ENCODE measurements at regions of chr9 and their contacts with region 1.

Region 1: DNA sequence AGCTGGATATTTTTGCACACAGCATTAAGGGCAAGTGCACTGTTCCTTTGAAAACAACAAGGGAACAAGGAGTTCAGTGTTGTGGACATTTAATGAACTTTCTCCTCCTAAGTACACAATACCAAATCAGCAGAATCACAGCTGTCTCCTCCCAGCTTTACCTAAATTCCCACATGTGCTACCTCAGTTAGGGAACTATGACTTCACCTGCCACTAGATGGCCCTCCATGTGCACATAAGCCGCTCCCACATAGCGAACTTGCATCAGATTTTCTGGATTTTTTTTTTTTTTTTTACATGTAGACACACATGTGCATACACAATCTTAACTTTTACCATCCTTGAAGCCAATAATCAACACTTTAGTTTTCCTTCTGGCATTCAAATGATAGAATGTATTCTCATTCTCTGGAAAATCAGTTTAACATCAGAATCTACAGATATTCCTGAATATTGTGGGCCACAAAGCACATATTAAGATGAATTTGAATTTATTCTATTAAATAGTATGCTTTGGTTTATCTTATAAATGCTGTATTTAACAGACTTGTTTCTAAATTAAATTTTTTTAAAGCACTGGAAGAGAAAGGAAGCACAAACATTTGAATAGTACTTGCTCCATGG is 123.6 kb downstream of the PALM2AKAP2 start:
- DNase-seq: peak; percentile 82
- ATAC-seq: peak; percentile 85
- H3K4me3 Mint-ChIP-seq: no peak overlapping the region
- H3K27ac Mint-ChIP-seq: peak overlapping the region; percentile 45
- H3K4me1 Mint-ChIP-seq: peaks cover 5% of the 10 kb centered on the region
- H3K27me3 Mint-ChIP-seq: peaks cover 4% of the 10 kb centered on the region

Region 2: DNA sequence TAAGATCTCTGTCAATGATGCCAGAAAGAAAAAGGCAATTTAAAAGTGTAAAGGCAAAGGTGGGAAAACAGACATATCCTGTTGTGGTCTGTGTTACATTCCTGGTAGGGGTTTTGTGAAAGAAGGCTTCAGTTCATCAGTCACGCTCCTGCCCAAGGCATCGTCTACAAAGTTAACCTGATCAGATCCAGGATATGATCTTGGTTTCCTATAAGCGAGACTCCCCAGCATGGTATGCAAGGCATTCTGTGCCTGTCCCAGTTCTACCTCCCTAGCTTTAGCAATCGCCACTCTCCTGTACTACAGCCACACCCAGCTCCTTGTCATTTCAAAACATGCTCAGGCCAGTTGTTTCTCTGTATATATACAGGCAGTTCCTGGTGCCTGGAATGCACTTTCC is 347.6 kb before region 1 on chr9:
- CTCF ChIA-PET with region 1: no interaction called
- POLR2A ChIA-PET with region 1: no interaction called
- intact Hi-C with region 1: no loop called
- DNase-seq: no peak
- ATAC-seq: no peak
- H3K4me3 Mint-ChIP-seq: no peak overlapping the region
- H3K27ac Mint-ChIP-seq: no peak overlapping the region
- H3K4me1 Mint-ChIP-seq: no peaks in the 10 kb centered on the region
- H3K27me3 Mint-ChIP-seq: peaks cover 15% of the 10 kb centered on the region

Region 3: GRCh38 chr9:109806506-109807115 is 97.0 kb before region 1 on chr9:
- CTCF ChIA-PET with region 1: no interaction called
- POLR2A ChIA-PET with region 1: no interaction called
- intact Hi-C with region 1: no loop called
- DNase-seq: no peak
- ATAC-seq: no peak
- H3K4me3 Mint-ChIP-seq: no peak overlapping the region
- H3K27ac Mint-ChIP-seq: no peak overlapping the region
- H3K4me1 Mint-ChIP-seq: no peaks in the 10 kb centered on the region
- H3K27me3 Mint-ChIP-seq: peaks cover 10% of the 10 kb centered on the region

Region 4: DNA sequence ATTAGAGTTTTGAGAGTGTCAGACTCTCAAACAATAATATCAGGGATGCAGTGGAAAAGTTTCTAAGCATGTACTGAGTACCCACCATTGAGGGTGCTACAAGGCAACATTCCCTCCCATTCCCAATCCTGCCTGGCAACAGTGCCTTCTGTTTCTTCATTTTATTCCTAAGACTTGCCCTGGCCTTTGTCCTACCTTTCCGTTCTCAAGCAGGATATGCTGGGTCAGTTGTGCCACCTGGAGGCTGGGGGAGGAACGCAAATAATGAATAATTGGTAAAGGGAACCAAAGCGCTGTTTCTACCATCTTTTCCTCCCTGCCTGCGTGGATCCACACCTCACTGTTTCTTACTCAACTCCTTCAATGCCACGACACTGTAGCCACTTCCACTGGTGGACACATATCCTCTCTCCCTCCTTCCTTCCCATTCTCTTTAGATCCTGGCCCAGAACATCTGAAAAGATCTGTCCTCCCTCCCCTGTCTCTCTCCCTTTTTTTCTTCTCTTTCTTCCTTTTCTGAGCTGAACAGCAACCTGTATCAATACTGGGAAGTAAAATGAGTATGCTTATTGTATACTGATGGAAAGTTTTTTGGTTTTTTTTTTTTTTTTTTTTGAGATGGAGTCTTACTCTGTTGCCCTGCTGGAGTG is 154.8 kb after region 1 on chr9:
- CTCF ChIA-PET with region 1: interaction called, 49 read pairs
- POLR2A ChIA-PET with region 1: no interaction called
- intact Hi-C with region 1: loop called (anchors 1 kb)
- DNase-seq: peak; percentile 71
- ATAC-seq: peak; percentile 66
- H3K4me3 Mint-ChIP-seq: no peak overlapping the region
- H3K27ac Mint-ChIP-seq: peak overlapping the region; percentile 48
- H3K4me1 Mint-ChIP-seq: peaks cover 9% of the 10 kb centered on the region
- H3K27me3 Mint-ChIP-seq: no peaks in the 10 kb centered on the region

Region 5: GRCh38 chr9:110143950-110144545 is 240.4 kb after region 1 on chr9:
- CTCF ChIA-PET with region 1: interaction called, 19 read pairs
- POLR2A ChIA-PET with region 1: interaction called, 11 read pairs
- intact Hi-C with region 1: no loop called
- DNase-seq: peak; percentile 66
- ATAC-seq: peak; percentile 75
- H3K4me3 Mint-ChIP-seq: no peak overlapping the region
- H3K27ac Mint-ChIP-seq: peak overlapping the region; percentile 87
- H3K4me1 Mint-ChIP-seq: peaks cover 51% of the 10 kb centered on the region
- H3K27me3 Mint-ChIP-seq: no peaks in the 10 kb centered on the region

Region 6: DNA sequence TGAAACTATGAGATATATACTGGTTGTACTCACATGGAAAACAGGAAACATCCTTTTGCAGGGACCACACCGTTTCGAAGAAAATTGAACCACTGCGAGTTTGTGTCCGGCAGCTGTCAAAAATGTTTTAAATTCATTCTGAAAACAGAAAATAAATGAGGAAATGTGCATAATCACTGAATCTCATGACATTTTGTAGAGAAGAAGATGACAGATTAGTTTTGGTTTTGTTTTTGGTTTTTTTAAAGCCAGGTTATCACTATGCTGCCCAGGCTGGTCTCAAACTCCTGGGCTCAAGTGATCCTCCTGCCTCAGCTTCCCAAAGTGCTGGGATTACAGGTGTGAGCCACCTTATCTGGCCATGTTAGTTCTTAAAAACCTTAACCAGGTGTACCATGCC is 430.6 kb after region 1 on chr9:
- CTCF ChIA-PET with region 1: no interaction called
- POLR2A ChIA-PET with region 1: interaction called, 12 read pairs
- intact Hi-C with region 1: no loop called
- DNase-seq: no peak
- ATAC-seq: no peak
- H3K4me3 Mint-ChIP-seq: no peak overlapping the region
- H3K27ac Mint-ChIP-seq: no peak overlapping the region
- H3K4me1 Mint-ChIP-seq: peaks cover 8% of the 10 kb centered on the region
- H3K27me3 Mint-ChIP-seq: no peaks in the 10 kb centered on the region

Region 7: GRCh38 chr9:110410961-110411360 is 507.3 kb after region 1 on chr9:
- CTCF ChIA-PET with region 1: no interaction called
- POLR2A ChIA-PET with region 1: no interaction called
- intact Hi-C with region 1: no loop called
- DNase-seq: no peak
- ATAC-seq: no peak
- H3K4me3 Mint-ChIP-seq: no peak overlapping the region
- H3K27ac Mint-ChIP-seq: no peak overlapping the region
- H3K4me1 Mint-ChIP-seq: no peaks in the 10 kb centered on the region
- H3K27me3 Mint-ChIP-seq: peaks cover 2% of the 10 kb centered on the region

Measured in activated CD4-positive, alpha-beta T cell treated with anti-CD3 and anti-CD28 coated beads for 36 hours (primary cell).